ENCODE measurements at regions of chr12 and their contacts with region 1.

Region 1: GRCh38 chr12:42482445-42483237 is 106.9 kb downstream of the PRICKLE1 start:
- DNase-seq: peak; percentile 69
- H3K4me3 ChIP-seq: peak overlapping the region; percentile 74
- H3K27ac ChIP-seq: no peak overlapping the region
- H3K4me1 ChIP-seq: peaks cover 5% of the 10 kb centered on the region
- H3K27me3 ChIP-seq: peaks cover 22% of the 10 kb centered on the region
- CTCF ChIP-seq: peak; percentile 85

Region 2: DNA sequence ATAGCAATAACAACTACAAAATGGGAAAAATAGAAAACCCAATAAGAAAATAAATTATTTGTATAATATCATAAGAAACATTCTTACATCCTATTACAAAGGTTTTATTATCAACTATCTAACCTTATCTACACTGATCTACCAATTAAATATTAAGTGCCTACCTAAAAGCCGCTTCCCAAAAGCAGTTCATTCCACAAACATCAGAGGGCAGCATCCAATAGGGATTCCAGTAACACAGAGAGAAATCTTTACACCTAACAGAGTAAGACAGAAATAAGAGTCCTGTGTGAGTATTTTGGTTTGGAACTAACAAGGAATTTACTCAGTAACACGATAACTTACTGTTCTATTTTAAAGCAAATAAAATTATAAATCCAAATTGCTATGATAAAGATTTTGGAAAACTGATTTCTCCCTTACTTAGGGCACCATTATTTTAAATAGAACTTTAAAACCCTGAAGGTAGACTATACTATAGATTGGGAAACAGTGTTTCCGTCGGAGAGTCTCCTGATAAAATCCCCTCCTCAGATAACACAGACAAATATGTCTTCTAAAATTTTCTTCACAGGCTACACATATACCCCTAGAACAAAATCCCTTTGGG is 352.9 kb before region 1 on chr12:
- CTCF ChIA-PET with region 1: no interaction called
- POLR2A ChIA-PET with region 1: no interaction called
- intact Hi-C with region 1: loop called (anchors 5 kb)
- DNase-seq: peak; percentile 85
- H3K4me3 ChIP-seq: no peak overlapping the region
- H3K27ac ChIP-seq: no peak overlapping the region
- H3K4me1 ChIP-seq: peaks cover 26% of the 10 kb centered on the region
- H3K27me3 ChIP-seq: no peaks in the 10 kb centered on the region
- CTCF ChIP-seq: peak; percentile 93

Region 3: DNA sequence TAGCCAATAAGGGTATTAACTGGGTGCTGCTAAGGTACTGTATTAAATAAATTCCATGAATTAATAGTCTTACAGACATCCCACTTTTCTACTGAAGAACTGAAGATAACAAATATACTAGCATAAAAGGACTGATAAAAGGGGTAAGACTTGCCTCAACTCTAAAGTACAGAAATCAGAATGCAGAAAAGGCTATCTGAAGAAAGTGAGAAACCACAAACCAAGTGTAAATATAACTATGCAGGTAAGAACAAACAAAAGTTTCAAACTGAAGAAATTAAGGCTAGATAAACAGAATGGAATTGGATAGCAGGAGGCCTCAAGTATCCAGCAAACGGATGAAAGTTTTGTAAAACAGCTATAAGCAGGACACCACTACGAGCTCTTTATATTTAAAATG is 274.1 kb before region 1 on chr12:
- CTCF ChIA-PET with region 1: no interaction called
- POLR2A ChIA-PET with region 1: no interaction called
- intact Hi-C with region 1: no loop called
- DNase-seq: no peak
- H3K4me3 ChIP-seq: no peak overlapping the region
- H3K27ac ChIP-seq: no peak overlapping the region
- H3K4me1 ChIP-seq: no peaks in the 10 kb centered on the region
- H3K27me3 ChIP-seq: no peaks in the 10 kb centered on the region
- CTCF ChIP-seq: no peak

Region 4: DNA sequence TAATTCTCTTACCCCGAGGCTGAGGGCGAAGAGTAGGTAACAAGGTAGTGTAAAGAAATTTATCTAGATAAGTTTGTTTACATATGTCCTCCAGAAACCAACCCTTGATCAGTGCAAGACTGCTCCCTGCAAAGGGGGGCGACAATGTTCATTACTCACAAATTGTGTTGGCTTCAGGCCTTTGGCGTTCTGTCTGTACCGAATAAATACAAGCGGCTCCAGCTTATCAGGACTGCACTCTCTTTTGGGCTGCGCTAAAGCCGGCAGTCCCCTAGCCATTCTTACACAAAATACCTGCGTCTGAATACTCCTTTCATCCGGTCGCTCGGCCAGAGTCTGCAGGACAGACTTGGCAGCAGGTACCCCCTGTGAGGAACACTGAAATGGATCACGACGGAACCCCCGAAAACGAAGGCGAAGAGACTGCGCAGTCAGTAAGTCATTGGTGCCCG is 40.3 kb before region 1 on chr12:
- CTCF ChIA-PET with region 1: no interaction called
- POLR2A ChIA-PET with region 1: no interaction called
- intact Hi-C with region 1: no loop called
- DNase-seq: no peak
- H3K4me3 ChIP-seq: no peak overlapping the region
- H3K27ac ChIP-seq: no peak overlapping the region
- H3K4me1 ChIP-seq: no peaks in the 10 kb centered on the region
- H3K27me3 ChIP-seq: no peaks in the 10 kb centered on the region
- CTCF ChIP-seq: no peak

Region 5: DNA sequence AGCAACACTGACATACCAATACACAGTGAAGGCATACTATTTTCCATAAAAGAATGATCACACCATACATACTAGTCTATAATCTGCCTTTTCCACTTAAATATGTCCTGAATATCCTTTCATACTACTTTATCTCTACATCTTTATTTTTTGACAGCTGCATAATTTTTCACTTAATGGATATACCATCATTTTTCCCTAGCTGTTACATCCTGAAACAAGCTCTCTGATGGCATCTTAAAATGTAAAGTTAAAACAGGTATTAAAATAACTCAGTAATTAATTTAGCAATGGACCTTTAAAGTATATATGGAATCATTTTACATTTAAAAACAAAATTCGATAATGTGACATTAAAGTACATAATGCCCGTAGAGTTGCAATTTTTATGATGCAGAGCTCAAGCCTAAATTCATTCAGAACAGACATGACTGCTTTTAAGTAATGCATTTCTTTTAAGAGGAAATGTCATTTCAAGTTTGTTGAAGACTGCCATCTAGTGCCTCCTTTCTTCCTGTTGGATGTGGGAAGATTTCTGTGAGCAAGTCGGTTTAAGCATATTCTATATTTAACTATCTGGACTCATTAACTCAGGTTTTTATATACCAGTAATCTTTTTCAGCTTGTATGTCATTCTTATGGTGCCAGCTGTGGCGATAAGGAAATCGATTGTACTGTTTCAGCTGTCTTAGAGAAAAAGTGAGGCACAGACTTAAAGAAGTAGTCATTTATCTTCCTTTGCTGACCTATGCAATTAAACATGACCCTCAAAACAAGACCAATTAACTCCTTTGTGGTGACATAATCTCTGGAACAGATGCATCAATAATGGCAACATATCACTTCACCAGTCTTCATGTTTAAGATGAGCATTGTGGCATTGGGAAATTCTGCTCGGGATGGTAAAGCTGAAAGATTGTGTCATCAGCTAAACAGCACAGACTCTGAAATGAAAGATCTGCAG is 86.6 kb after region 1 on chr12:
- CTCF ChIA-PET with region 1: interaction called, 9 read pairs
- POLR2A ChIA-PET with region 1: no interaction called
- intact Hi-C with region 1: loop called (anchors 1 kb)
- DNase-seq: peak; percentile 74
- H3K4me3 ChIP-seq: no peak overlapping the region
- H3K27ac ChIP-seq: no peak overlapping the region
- H3K4me1 ChIP-seq: no peaks in the 10 kb centered on the region
- H3K27me3 ChIP-seq: no peaks in the 10 kb centered on the region
- CTCF ChIP-seq: peak; percentile 71

Region 6: DNA sequence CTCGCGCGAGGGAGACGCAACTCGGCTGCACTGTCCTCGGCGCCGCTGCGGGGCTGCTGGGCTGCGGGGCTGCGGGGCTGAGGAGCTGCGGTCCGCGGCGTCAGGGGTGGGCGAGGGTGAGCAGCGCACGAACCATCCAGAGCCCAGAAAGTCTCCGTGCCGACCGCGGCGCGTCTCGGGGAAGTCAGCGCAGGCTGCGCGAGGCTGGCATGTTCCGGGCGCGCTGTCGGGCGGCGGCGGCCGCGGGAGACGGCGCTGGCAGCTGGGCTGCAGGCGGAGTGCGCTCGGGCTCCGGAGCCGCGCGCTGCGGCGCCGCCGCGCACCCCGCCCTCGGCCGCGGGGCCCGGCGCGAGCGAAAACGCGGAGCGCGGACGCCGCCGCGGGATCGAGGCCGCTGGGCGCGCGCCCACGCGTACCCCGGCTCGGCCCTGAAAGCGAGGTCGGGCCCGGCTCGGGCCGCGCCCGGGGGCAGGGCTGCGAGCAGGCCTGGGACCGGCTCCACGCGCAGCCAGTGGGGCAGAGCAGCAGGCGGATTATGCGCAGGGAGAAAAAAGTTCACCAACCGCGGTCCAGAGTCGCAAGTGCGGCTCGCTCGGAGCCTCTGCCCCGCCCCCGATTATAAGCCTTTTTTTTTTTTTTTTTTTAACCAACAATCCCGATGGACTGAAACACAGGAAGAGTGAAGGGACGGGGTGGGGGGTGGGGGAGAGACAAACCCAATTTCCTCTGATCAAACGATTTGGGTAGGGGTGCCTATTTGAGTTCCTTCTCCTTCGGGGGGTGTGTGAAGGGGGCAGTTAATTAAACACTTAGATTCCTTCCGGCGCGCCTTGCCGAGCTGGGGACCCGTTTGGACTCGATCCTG is 107.1 kb after region 1 on chr12 and contains the start of gene PRICKLE1:
- CTCF ChIA-PET with region 1: no interaction called
- POLR2A ChIA-PET with region 1: no interaction called
- intact Hi-C with region 1: loop called (anchors 5 kb)
- DNase-seq: peak; percentile 67
- H3K4me3 ChIP-seq: peak within 1 kb of the TSS; percentile 59
- H3K27ac ChIP-seq: no peak within 1 kb of the TSS
- H3K4me1 ChIP-seq: peaks cover 26% of the 10 kb centered on the region
- H3K27me3 ChIP-seq: peaks cover 26% of the 10 kb centered on the region
- CTCF ChIP-seq: no peak
- total RNA-seq, gene PRICKLE1: 0.70 and 1.1 TPM in 2 replicates

Region 7: DNA sequence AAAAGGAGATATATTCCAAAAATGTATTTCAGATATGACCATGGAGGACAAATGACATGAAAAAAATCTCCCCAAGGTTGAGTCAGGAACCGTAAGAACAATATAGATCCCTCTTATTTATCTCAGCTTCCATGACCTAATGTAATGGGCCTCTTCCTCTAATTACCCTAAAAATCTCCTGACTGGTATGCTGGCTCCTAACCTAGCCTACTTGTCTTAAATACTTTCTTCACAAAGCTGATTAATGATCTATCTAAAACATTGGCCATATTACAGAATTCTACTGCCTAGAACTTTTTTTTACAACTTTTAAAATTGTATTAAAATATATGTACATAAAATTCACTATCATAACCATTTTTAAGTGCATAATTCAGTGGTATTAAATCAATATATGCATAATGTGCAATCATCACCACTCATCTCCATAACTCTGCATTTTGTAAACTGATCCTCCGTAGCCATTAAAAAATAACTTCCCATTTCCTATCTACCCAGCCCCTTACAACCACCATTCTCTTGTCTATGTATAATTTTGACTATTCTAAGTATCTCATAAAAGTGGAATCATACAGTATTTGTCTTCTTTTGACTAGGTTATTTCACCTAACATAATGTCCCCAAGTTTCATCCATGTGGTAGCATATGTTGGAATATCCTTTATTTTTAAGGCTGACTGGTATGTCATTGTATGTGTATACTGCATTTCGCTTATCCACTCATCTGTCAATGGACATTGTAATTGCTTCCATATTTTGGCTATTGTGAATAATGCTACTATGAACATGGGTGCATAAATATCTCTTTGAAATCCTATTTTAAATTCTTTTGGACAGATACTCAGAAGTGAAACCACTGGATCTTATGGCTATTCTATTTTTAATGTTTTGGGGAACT is 604.8 kb after region 1 on chr12:
- CTCF ChIA-PET with region 1: no interaction called
- POLR2A ChIA-PET with region 1: no interaction called
- intact Hi-C with region 1: no loop called
- DNase-seq: no peak
- H3K4me3 ChIP-seq: no peak overlapping the region
- H3K27ac ChIP-seq: no peak overlapping the region
- H3K4me1 ChIP-seq: no peaks in the 10 kb centered on the region
- H3K27me3 ChIP-seq: no peaks in the 10 kb centered on the region
- CTCF ChIP-seq: no peak

Region 8: DNA sequence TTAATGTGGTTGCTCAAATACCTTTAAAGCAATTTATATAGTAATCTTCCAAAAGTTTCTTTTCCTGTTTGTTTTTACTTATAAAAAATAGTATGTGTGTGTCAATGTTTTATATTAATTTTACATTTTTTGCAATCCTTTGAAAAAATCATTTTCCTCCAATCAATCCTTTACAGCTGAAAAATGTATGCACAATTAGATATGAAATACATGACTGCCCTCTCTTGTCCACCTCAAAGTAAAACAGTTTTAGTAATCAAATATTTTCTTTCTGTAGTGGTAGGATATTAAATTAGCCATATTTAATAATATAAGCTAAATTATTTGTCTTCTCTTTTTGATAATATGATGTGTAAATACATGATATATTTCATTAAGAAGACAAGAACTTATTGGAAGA is 799.5 kb after region 1 on chr12:
- CTCF ChIA-PET with region 1: no interaction called
- POLR2A ChIA-PET with region 1: no interaction called
- intact Hi-C with region 1: loop called (anchors 2 kb)
- DNase-seq: peak; percentile 9
- H3K4me3 ChIP-seq: no peak overlapping the region
- H3K27ac ChIP-seq: no peak overlapping the region
- H3K4me1 ChIP-seq: no peaks in the 10 kb centered on the region
- H3K27me3 ChIP-seq: no peaks in the 10 kb centered on the region
- CTCF ChIP-seq: peak; percentile 51

Region 9: GRCh38 chr12:43338848-43339526 is 856.3 kb after region 1 on chr12:
- CTCF ChIA-PET with region 1: interaction called, 14 read pairs
- POLR2A ChIA-PET with region 1: no interaction called
- intact Hi-C with region 1: loop called (anchors 5 kb)
- DNase-seq: peak; percentile 64
- H3K4me3 ChIP-seq: no peak overlapping the region
- H3K27ac ChIP-seq: no peak overlapping the region
- H3K4me1 ChIP-seq: no peaks in the 10 kb centered on the region
- H3K27me3 ChIP-seq: no peaks in the 10 kb centered on the region
- CTCF ChIP-seq: peak; percentile 40; the same call in 1 of the 2 replicates

Measured in A673 (cell line).